ENCODE measurements at regions of chr17 and their contacts with region 1.

Region 1: DNA sequence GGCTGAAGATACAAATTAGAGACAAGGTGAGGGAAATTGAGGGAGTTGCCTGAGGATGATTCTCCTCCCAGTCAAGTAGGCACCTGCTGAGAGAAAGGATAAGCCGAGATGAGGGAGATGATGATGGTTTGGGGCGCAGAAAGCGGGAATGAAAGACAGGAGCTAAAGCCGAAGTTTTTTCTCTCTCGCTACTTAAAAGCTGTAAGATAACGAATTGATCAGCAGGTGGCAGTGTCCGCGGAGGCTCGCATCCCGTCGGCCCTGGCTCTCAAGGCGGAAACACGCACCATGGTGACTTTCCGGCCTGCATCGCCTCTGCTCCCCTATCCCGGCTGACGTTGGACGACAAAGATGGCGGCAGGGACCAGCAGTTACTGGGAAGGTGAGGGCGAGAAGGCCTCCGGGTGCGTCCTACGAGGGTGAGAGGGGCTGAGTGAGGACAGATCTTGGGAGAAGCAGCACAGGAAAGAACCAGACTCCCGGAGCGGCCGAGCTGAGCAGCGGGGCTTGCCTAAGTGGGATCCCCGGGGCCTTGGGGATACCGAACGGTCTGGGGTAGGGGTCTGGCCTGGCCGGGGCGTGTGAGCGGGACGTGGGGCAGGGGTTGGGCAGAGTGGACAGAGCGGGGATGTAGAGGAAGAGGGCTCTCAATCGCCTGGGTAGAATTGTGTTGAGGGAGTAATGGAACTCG is at the start of gene GOSR1:
- DNase-seq: peak; percentile 96
- H3K4me3 Mint-ChIP-seq: peak within 1 kb of the TSS; percentile 96
- H3K27ac Mint-ChIP-seq: peak within 1 kb of the TSS; percentile 100
- H3K4me1 Mint-ChIP-seq: peaks cover 12% of the 10 kb centered on the region
- H3K27me3 Mint-ChIP-seq: no peaks in the 10 kb centered on the region
- CTCF ChIP-seq: peak; percentile 50
- total RNA-seq, gene GOSR1: 57.6 and 69.4 TPM in 2 replicates

Region 2: GRCh38 chr17:30134551-30134950 is 342.7 kb before region 1 on chr17:
- CTCF ChIA-PET with region 1: no interaction called
- POLR2A ChIA-PET with region 1: no interaction called
- intact Hi-C with region 1: no loop called
- DNase-seq: no peak
- H3K4me3 Mint-ChIP-seq: no peak overlapping the region
- H3K27ac Mint-ChIP-seq: no peak overlapping the region
- H3K4me1 Mint-ChIP-seq: peaks cover 6% of the 10 kb centered on the region
- H3K27me3 Mint-ChIP-seq: no peaks in the 10 kb centered on the region
- CTCF ChIP-seq: no peak

Region 3: GRCh38 chr17:30344283-30345088 is 132.7 kb before region 1 on chr17:
- CTCF ChIA-PET with region 1: interaction called, 6 read pairs
- POLR2A ChIA-PET with region 1: interaction called, 12 read pairs
- intact Hi-C with region 1: loop called (anchors 2 kb)
- DNase-seq: peak; percentile 89
- H3K4me3 Mint-ChIP-seq: peak overlapping the region; percentile 17
- H3K27ac Mint-ChIP-seq: peak overlapping the region; percentile 52
- H3K4me1 Mint-ChIP-seq: peaks cover 20% of the 10 kb centered on the region
- H3K27me3 Mint-ChIP-seq: no peaks in the 10 kb centered on the region
- CTCF ChIP-seq: no peak

Region 4: DNA sequence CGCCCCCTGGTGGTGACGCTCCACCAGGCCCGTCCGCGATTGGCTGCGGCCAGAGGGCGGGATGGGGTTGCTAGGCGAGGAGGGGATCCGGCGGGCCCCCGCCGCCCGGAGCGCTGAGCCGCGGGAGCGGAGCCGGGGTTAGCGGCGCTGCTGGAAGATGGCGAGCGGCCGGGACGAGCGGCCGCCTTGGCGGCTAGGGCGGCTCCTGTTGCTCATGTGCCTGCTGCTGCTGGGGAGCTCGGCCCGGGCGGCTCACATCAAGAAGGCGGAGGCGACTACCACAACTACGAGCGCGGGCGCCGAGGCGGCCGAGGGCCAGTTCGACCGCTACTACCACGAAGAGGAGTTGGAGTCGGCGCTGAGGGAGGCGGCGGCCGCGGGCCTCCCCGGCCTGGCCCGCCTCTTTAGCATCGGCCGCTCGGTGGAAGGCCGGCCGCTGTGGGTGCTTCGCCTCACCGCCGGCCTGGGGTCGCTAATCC is 98.4 kb before region 1 on chr17 and contains the start of gene CPD:
- CTCF ChIA-PET with region 1: interaction called, 4 read pairs
- POLR2A ChIA-PET with region 1: interaction called, 7 read pairs
- intact Hi-C with region 1: loop called (anchors 5 kb)
- DNase-seq: peak; percentile 96
- H3K4me3 Mint-ChIP-seq: peak within 1 kb of the TSS; percentile 70
- H3K27ac Mint-ChIP-seq: peak within 1 kb of the TSS; percentile 70
- H3K4me1 Mint-ChIP-seq: peaks cover 28% of the 10 kb centered on the region
- H3K27me3 Mint-ChIP-seq: no peaks in the 10 kb centered on the region
- CTCF ChIP-seq: no peak
- total RNA-seq, gene CPD: 47.9 and 67.4 TPM in 2 replicates

Region 5: GRCh38 chr17:30495586-30495985 is 18.4 kb after region 1 on chr17:
- CTCF ChIA-PET with region 1: no interaction called
- POLR2A ChIA-PET with region 1: interaction called, 13 read pairs
- intact Hi-C with region 1: no loop called
- DNase-seq: no peak
- H3K4me3 Mint-ChIP-seq: no peak overlapping the region
- H3K27ac Mint-ChIP-seq: no peak overlapping the region
- H3K4me1 Mint-ChIP-seq: no peaks in the 10 kb centered on the region
- H3K27me3 Mint-ChIP-seq: no peaks in the 10 kb centered on the region
- CTCF ChIP-seq: no peak

Region 6: DNA sequence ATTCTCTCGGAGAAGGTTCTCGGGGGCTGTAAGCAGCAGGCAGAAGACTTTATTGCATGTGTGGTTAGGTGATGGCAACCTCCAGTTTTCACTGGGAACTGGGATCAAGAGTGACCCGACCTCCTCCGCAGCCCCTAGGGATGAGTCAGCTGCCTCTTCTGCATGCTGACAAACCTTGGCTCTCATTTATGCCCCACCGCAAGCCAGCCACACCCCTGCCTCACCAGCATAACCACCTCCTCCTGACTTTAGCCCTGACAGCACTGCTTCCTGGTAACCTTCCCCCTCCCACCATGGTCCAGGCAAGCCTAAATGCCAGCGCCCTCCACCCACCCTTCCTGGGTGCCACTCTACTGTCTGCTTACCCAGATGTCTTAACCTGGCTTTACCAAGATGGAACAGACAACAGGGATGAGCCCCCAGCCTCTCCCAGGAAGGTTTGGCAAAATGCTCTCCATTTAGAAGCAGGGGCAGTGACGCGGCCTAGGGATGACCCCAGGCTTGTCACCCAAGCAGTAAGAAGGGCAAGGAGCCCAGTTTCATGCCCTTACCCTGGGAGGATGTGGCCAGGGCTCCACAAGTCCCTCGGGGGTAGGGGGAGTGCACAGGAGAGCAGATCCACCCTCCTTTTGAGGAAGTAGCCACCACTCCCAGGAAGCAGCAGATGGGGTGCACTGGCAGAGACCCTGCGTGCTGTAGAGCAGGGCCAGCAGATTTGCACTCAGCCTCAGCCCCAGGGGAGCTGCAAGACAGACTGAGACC is 73.5 kb after region 1 on chr17:
- CTCF ChIA-PET with region 1: no interaction called
- POLR2A ChIA-PET with region 1: no interaction called
- intact Hi-C with region 1: no loop called
- DNase-seq: peak; percentile 52
- H3K4me3 Mint-ChIP-seq: no peak overlapping the region
- H3K27ac Mint-ChIP-seq: no peak overlapping the region
- H3K4me1 Mint-ChIP-seq: peaks cover 7% of the 10 kb centered on the region
- H3K27me3 Mint-ChIP-seq: no peaks in the 10 kb centered on the region
- CTCF ChIP-seq: no peak

Region 7: GRCh38 chr17:30600049-30600829 is 123.0 kb after region 1 on chr17:
- CTCF ChIA-PET with region 1: no interaction called
- POLR2A ChIA-PET with region 1: interaction called, 5 read pairs
- intact Hi-C with region 1: loop called (anchors 1 kb)
- DNase-seq: peak; percentile 86
- H3K4me3 Mint-ChIP-seq: peak overlapping the region; percentile 96
- H3K27ac Mint-ChIP-seq: peak overlapping the region; percentile 89
- H3K4me1 Mint-ChIP-seq: peaks cover 12% of the 10 kb centered on the region
- H3K27me3 Mint-ChIP-seq: no peaks in the 10 kb centered on the region
- CTCF ChIP-seq: peak; percentile 85

Region 8: GRCh38 chr17:30716461-30717300 is 239.5 kb after region 1 on chr17:
- CTCF ChIA-PET with region 1: interaction called, 5 read pairs
- POLR2A ChIA-PET with region 1: interaction called, 3 read pairs
- intact Hi-C with region 1: loop called (anchors 5 kb)
- DNase-seq: no peak
- H3K4me3 Mint-ChIP-seq: no peak overlapping the region
- H3K27ac Mint-ChIP-seq: no peak overlapping the region
- H3K4me1 Mint-ChIP-seq: peaks cover 16% of the 10 kb centered on the region
- H3K27me3 Mint-ChIP-seq: no peaks in the 10 kb centered on the region
- CTCF ChIP-seq: no peak

Measured in MCF 10A (cell line).